Naive thymus-derived CD4-positive, alpha-beta T cell (primary cell): ENCODE measurements at regions of chr6 and their contacts with region 1.

Region 1: DNA sequence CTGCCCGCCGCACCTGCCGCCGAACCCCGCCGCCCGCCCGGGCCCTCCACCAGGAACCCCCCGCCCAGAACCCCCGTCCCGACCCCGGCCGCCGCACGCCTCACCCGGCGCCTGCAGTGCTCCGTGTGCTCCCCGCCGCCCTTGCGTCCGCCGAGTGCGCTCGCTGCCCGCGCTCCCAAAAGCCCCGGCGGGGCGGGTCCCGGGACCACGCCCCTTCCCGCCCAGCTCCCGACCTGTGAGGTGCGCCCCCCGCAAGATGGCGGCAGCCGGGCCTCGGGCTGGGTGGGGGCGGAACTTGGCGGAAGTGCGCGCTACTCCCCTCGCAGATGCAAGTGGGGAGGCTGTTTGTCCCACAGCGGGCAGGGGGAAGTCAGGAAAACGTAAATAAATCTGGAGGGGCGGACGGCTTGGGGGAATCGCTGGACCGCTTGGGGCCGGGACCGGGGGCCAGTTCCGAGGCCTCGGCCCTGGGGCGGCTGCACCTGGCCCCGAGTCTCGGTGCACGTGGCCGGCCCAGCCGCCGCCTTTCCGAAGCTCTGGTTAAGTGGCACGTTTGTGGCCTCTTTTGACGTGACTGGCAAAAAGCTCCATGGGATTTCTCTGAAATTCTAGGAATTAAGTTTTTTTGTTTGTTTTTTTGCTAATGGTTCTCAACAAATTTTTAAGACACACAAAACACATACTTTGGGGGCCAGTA is at the start of gene EZR:
- DNase-seq: peak; percentile 70 to 85 (median 80)
- ATAC-seq: peak; percentile 80
- H3K4me3 ChIP-seq: peak within 1 kb of the TSS; percentile 50
- H3K4me3 Mint-ChIP-seq: peak within 1 kb of the TSS; percentile 81 to 97 (median 90)
- H3K27ac ChIP-seq: peak within 1 kb of the TSS; percentile 99
- H3K27ac Mint-ChIP-seq: peak within 1 kb of the TSS; percentile 89 to 97 (median 91)
- H3K4me1 ChIP-seq: peaks cover 21 to 24% of the 10 kb centered on the region in 2 donors
- H3K4me1 Mint-ChIP-seq: peaks cover 30 to 47% (median 36%) of the 10 kb centered on the region in 7 donors
- H3K27me3 ChIP-seq: no peaks in the 10 kb centered on the region
- H3K27me3 Mint-ChIP-seq: no peaks in the 10 kb centered on the region
- total RNA-seq, gene EZR: 132 to 201 (median 163) TPM

Region 2: DNA sequence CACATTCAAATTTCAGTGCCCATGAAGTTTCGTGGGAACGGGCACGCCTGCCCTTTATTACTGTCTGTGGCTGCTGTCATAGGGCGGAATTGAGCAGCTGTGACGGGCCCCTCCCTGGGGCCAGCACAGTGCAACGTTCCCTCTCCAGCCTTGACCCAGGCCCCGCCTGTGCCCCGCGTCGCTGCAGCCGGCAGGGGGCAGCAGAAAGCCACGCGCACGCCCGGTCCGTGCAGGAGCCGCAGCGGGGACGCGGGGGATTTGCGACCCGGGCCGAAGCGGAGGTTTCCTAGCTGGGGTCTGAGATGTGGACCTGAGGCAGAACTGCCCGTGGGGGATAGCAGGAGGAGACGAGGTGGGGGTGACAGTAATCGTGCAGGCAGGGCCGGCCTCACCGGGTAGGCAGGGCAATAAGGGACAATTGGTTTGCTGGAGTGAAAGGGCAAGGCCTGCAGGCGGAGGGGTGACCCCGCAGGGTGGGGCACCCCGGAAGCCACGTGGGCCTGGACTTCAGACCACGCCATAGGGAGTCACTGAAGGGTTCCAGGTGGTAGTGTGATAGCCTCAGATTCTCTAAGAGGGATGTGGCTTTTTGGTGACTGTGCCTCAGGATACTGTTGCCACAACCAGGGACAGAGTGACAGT is 115.1 kb before region 1 on chr6:
- CTCF ChIA-PET with region 1: interaction called, 3 read pairs
- POLR2A ChIA-PET with region 1: interaction called, 3 read pairs
- intact Hi-C with region 1: loop called in 1 of 2 experiments (anchors 1 kb)
- DNase-seq: peak; percentile 55 to 85 (median 74)
- ATAC-seq: peak; percentile 98
- H3K4me3 ChIP-seq: peak overlapping the region; percentile 60
- H3K4me3 Mint-ChIP-seq: peak overlapping the region; percentile 73 to 90 (median 84)
- H3K27ac ChIP-seq: peak overlapping the region; percentile 35
- H3K27ac Mint-ChIP-seq: peak overlapping the region in 8 of 9 donors; percentile 14 to 84 (median 64)
- H3K4me1 ChIP-seq: peaks cover 8 to 9% of the 10 kb centered on the region in 2 donors
- H3K4me1 Mint-ChIP-seq: peaks cover 7 to 27% (median 15%) of the 10 kb centered on the region in 7 donors
- H3K27me3 ChIP-seq: no peaks in the 10 kb centered on the region
- H3K27me3 Mint-ChIP-seq: no peaks in the 10 kb centered on the region

Region 3: DNA sequence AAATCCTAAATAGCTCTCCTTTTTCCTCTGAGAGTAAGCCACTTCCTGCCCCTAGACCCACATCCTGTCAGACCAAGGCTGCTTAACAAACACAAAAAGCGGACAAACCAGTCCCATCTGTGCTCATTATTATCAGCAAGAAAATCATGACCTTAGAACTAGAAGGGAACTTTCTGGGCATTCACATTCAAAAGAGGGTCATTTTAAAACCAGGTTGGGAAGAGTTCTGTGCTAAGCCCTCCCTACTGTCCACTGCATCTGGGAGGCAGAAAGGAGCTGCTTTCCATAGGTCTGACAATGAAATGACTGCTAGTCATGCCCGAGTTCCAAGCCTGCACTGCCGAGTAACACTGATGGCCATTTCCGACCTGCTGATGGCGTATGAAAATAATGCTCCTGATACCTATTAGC is 15.6 kb before region 1 on chr6:
- CTCF ChIA-PET with region 1: interaction called, 5 read pairs
- POLR2A ChIA-PET with region 1: interaction called, 10 read pairs
- intact Hi-C with region 1: loop called (anchors 1 kb)
- DNase-seq: peak in 7 of 9 donors; percentile 40 to 67 (median 60)
- ATAC-seq: peak; percentile 55
- H3K4me3 ChIP-seq: peak overlapping the region; percentile 37
- H3K4me3 Mint-ChIP-seq: peak overlapping the region; percentile 72 to 94 (median 81)
- H3K27ac ChIP-seq: peak overlapping the region; percentile 77
- H3K27ac Mint-ChIP-seq: peak overlapping the region; percentile 72 to 94 (median 82)
- H3K4me1 ChIP-seq: peaks cover 76 to 92% of the 10 kb centered on the region in 2 donors
- H3K4me1 Mint-ChIP-seq: peaks cover 57 to 98% (median 92%) of the 10 kb centered on the region in 7 donors
- H3K27me3 ChIP-seq: no peaks in the 10 kb centered on the region
- H3K27me3 Mint-ChIP-seq: no peaks in the 10 kb centered on the region

Region 4: DNA sequence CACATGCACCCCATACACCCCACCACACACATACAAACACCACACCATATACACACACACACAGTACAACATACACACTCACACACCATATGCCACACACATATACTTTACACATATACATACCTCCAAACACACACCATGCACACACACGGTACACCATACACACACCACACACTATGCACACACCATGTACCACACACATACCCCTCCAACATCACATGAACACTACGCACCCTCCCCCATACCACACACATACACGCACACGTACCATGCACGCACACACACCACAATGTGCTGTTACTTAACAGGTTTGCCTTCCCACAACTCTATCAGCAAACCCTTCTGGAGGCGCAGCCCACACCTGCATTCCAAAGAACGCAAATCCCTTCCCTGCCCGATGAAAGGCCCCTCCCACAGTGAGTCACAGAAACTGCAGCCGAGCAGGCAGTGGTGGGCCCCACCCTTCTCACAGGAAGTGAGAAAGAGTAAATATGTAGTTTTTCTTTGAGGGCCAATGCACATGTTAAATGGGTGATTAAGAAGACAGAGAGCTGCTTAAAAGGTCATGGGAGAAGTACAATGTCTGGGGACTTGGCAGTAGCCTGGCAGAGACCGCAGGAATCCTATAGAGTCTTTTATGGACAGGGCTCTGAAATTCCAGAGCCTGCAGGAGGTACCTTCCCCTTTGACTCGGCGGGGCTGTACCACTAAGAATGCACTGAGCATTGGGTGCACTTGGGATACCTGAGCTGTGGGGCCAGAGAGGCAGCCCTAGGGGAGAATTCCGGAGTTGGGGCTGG is 33.9 kb after region 1 on chr6:
- CTCF ChIA-PET with region 1: interaction called, 5 read pairs
- POLR2A ChIA-PET with region 1: interaction called, 29 read pairs
- intact Hi-C with region 1: loop called (anchors 1 kb)
- DNase-seq: peak; percentile 54 to 93 (median 86)
- ATAC-seq: peak; percentile 79
- H3K4me3 ChIP-seq: peak overlapping the region; percentile 55
- H3K4me3 Mint-ChIP-seq: no peak overlapping the region
- H3K27ac ChIP-seq: peak overlapping the region; percentile 83
- H3K27ac Mint-ChIP-seq: no peak overlapping the region
- H3K4me1 ChIP-seq: peaks cover 47 to 55% of the 10 kb centered on the region in 2 donors
- H3K4me1 Mint-ChIP-seq: peaks cover 16 to 42% (median 33%) of the 10 kb centered on the region in 7 donors
- H3K27me3 ChIP-seq: no peaks in the 10 kb centered on the region
- H3K27me3 Mint-ChIP-seq: no peaks in the 10 kb centered on the region

Region 5: GRCh38 chr6:159726918-159727716 is 907.8 kb after region 1 on chr6 and contains the start of gene WTAP:
- CTCF ChIA-PET with region 1: no interaction called
- POLR2A ChIA-PET with region 1: no interaction called
- intact Hi-C with region 1: loop called in 1 of 2 experiments (anchors 10 kb)
- DNase-seq: peak; percentile 83 to 97 (median 97)
- ATAC-seq: peak; percentile 93
- H3K4me3 ChIP-seq: peak within 1 kb of the TSS; percentile 89
- H3K4me3 Mint-ChIP-seq: peak within 1 kb of the TSS; percentile 87 to 97 (median 95)
- H3K27ac ChIP-seq: peak within 1 kb of the TSS; percentile 91
- H3K27ac Mint-ChIP-seq: peak within 1 kb of the TSS; percentile 95 to 100 (median 99)
- H3K4me1 ChIP-seq: peaks cover 33 to 34% of the 10 kb centered on the region in 2 donors
- H3K4me1 Mint-ChIP-seq: peaks cover 34 to 79% (median 67%) of the 10 kb centered on the region in 7 donors
- H3K27me3 ChIP-seq: no peaks in the 10 kb centered on the region
- H3K27me3 Mint-ChIP-seq: peaks cover 0 to 6% (median 0%) of the 10 kb centered on the region in 5 donors
- total RNA-seq, gene WTAP: 117 to 152 (median 141) TPM